ENCODE measurements at regions of chr11 and their contacts with region 1.

Region 1: GRCh38 chr11:86869966-86870570 is 69.7 kb downstream of the PRSS23 start:
- DNase-seq: peak; percentile 72 to 78 (median 76)
- ATAC-seq: peak; percentile 95
- H3K4me3 ChIP-seq: no peak overlapping the region
- H3K27ac ChIP-seq: no peak overlapping the region
- H3K4me1 ChIP-seq: peaks cover 3 to 4% of the 10 kb centered on the region in 2 experiments; a peak in 4 of 5 replicates
- H3K27me3 ChIP-seq: no peaks in the 10 kb centered on the region; a peak in 1 of 5 replicates
- CTCF ChIP-seq: peak; percentile 80 to 92 (median 82)
- EP300 ChIP-seq: no peak
- POLR2A ChIP-seq: no peak
- RAD21 ChIP-seq: peak; percentile 91 to 92

Region 2: DNA sequence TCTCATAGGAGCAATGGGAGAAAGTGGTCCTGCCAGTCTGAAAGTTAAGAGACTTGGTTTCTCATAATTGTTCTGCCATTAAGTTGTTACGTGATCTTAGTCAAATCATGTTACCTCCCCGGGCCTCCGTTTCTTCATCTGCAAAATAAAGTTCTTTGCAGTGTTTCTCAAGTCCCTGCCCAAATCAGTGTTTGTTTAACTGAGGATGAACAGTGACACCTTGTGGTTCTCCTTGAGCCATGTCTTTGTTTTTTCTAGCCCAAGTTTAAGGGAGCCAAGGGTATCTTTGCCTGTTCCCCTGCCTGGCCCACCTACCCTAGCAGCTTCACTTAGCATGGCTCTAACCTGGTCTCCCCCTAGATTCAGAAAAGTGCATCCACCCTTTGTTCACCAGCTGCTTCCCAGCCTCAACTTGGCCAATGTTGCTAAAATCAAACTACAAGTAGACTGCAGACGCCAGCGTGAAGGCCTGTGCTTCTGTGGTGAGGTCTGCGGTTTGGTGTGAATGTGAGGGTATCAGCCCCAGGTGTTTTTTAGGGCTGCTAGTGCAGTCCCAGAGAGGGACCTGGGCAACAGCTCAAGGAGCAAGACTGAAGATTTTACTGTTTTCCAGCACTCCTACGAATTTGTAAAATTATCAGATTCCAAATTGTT is 49.6 kb after region 1 on chr11:
- CTCF ChIA-PET with region 1: interaction called, 18 read pairs
- POLR2A ChIA-PET with region 1: no interaction called
- in situ Hi-C with region 1: loop called (anchors 5 kb)
- intact Hi-C with region 1: loop called (anchors 1 kb)
- DNase-seq: peak; percentile 35 to 69 (median 47)
- ATAC-seq: peak; percentile 88
- H3K4me3 ChIP-seq: no peak overlapping the region
- H3K27ac ChIP-seq: no peak overlapping the region
- H3K4me1 ChIP-seq: peaks cover 0 to 11% of the 10 kb centered on the region in 2 experiments; a peak in 3 of 5 replicates
- H3K27me3 ChIP-seq: no peaks in the 10 kb centered on the region
- CTCF ChIP-seq: peak; percentile 70 to 79 (median 71)
- EP300 ChIP-seq: no peak
- POLR2A ChIP-seq: no peak
- RAD21 ChIP-seq: peak; percentile 77 to 84

Region 3: GRCh38 chr11:87281496-87281895 is 411.4 kb after region 1 on chr11:
- CTCF ChIA-PET with region 1: no interaction called
- POLR2A ChIA-PET with region 1: no interaction called
- in situ Hi-C with region 1: loop called (anchors 10 kb)
- intact Hi-C with region 1: no loop called
- DNase-seq: peak in 2 of 4 experiments; percentile 12 to 27
- ATAC-seq: peak; percentile 85
- H3K4me3 ChIP-seq: no peak overlapping the region
- H3K27ac ChIP-seq: no peak overlapping the region
- H3K4me1 ChIP-seq: no peaks in the 10 kb centered on the region
- H3K27me3 ChIP-seq: no peaks in the 10 kb centered on the region
- CTCF ChIP-seq: peak in 1 of 3 experiments; percentile 44; a peak in 2 of 6 replicates
- EP300 ChIP-seq: no peak
- POLR2A ChIP-seq: no peak
- RAD21 ChIP-seq: peak; percentile 65 to 72

Region 4: DNA sequence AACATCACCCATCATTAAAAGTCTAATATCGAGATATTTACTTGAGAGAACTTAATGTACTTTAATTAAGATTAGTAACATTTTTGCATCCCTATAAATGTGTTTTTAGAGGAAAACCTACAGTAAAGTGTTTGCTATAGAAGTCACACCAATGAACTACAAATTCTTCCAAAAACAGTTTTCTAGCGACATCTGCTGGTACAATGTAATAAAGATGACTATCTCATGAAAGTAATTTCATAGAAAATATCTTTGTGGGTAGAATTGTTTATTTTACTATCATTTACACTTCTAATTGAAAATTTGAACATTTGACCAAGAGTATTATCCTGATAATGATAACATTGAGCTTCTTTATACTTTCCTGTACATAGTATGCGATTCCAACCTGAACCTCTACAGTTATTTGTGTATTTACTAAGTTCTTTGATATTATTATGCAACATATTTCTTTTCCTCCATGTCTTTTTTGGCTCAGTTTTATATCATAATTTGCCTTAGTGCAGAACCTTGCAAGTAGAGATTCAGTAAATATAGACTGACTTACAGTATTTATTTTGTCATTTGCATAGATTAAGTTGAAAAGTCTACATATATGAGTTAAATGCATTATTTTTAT is 420.3 kb after region 1 on chr11:
- CTCF ChIA-PET with region 1: interaction called, 13 read pairs
- POLR2A ChIA-PET with region 1: no interaction called
- in situ Hi-C with region 1: loop called (anchors 10 kb)
- intact Hi-C with region 1: loop called (anchors 1 kb)
- DNase-seq: peak; percentile 25 to 72 (median 33)
- ATAC-seq: peak; percentile 80
- H3K4me3 ChIP-seq: no peak overlapping the region
- H3K27ac ChIP-seq: no peak overlapping the region
- H3K4me1 ChIP-seq: no peaks in the 10 kb centered on the region
- H3K27me3 ChIP-seq: no peaks in the 10 kb centered on the region
- CTCF ChIP-seq: peak in 2 of 3 experiments; percentile 42 to 80; a peak in 3 of 6 replicates
- EP300 ChIP-seq: no peak
- POLR2A ChIP-seq: no peak
- RAD21 ChIP-seq: peak; percentile 88 to 90

Region 5: GRCh38 chr11:87352759-87353707 is 483.0 kb after region 1 on chr11:
- CTCF ChIA-PET with region 1: no interaction called
- POLR2A ChIA-PET with region 1: no interaction called
- in situ Hi-C with region 1: no loop called
- intact Hi-C with region 1: loop called (anchors 5 kb)
- DNase-seq: peak; percentile 82 to 90 (median 86)
- ATAC-seq: peak; percentile 98
- H3K4me3 ChIP-seq: no peak overlapping the region
- H3K27ac ChIP-seq: no peak overlapping the region
- H3K4me1 ChIP-seq: peaks cover 3 to 4% of the 10 kb centered on the region in 2 experiments; a peak in 4 of 5 replicates
- H3K27me3 ChIP-seq: peaks cover 2 to 8% of the 10 kb centered on the region in 2 experiments; a peak in 1 of 5 replicates
- CTCF ChIP-seq: peak; percentile 92 to 97 (median 94)
- EP300 ChIP-seq: no peak
- POLR2A ChIP-seq: no peak
- RAD21 ChIP-seq: peak; percentile 86 to 95

Region 6: GRCh38 chr11:87421422-87421821 is 551.4 kb after region 1 on chr11:
- CTCF ChIA-PET with region 1: interaction called, 20 read pairs
- POLR2A ChIA-PET with region 1: no interaction called
- in situ Hi-C with region 1: loop called (anchors 10 kb)
- intact Hi-C with region 1: loop called (anchors 1 kb)
- DNase-seq: peak; percentile 70 to 82 (median 77)
- ATAC-seq: peak; percentile 97
- H3K4me3 ChIP-seq: no peak overlapping the region
- H3K27ac ChIP-seq: no peak overlapping the region
- H3K4me1 ChIP-seq: no peaks in the 10 kb centered on the region
- H3K27me3 ChIP-seq: no peaks in the 10 kb centered on the region
- CTCF ChIP-seq: peak; percentile 62 to 78 (median 66)
- EP300 ChIP-seq: no peak
- POLR2A ChIP-seq: no peak
- RAD21 ChIP-seq: peak; percentile 64 to 85

Measured in K562 (cell line).